ENCODE measurements at regions of chr20 and their contacts with region 1.

Region 1: DNA sequence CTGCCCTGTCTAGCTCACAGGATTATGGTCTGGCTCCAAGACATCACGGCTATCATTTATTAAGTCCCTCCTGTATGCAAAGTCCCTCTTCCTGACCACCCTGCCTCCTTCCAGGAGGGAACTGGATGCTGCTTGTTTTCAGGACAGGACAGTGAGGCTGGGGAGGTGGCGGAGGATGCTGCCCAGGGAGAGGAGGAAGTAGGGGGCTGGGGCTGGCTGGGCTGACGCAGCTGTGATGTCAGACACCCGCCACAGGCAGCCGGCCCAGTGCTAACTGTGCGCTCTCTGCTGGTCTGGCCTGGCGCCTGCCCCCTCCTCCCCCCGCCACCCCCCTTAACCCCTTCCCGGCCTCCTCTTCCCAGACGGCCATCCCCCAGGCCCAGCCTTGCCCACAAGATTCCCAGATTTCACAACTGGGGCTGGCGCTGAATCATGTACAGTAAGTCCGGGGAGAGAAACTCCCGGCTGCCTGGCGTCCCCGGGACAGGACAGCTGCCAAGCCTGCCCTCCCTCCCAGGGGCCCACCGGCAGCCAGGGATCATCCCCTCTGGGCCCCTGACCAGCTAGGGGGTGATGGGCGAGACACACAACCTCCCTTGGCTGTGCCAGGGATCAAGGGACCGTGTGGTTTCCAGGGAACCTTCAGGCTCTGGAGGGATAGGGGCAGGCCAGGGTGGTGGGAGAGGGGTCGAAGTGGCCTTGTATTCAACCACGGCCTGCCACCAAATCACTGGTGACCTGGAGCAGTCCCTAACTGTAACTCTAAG is 118.1 kb downstream of the CEBPB start:
- DNase-seq: peak; percentile 90 to 98
- ATAC-seq: peak; percentile 81 to 85
- H3K4me3 ChIP-seq: peak overlapping the region; percentile 29
- H3K27ac ChIP-seq: peak overlapping the region; percentile 93 to 98
- H3K4me1 ChIP-seq: peaks cover 95% of the 10 kb centered on the region
- CTCF ChIP-seq: no peak
- EP300 ChIP-seq: peak; percentile 88 to 99; a peak in 4 of 5 replicates
- POLR2A ChIP-seq: peak; percentile 33
- RAD21 ChIP-seq: peak; percentile 25 to 82

Region 2: GRCh38 chr20:50292324-50293243 is 16.1 kb before region 1 on chr20:
- CTCF ChIA-PET with region 1: interaction called, 9 read pairs
- POLR2A ChIA-PET with region 1: interaction called, 10 read pairs
- DNase-seq: peak; percentile 88 to 97
- ATAC-seq: peak; percentile 74 to 86
- H3K4me3 ChIP-seq: no peak overlapping the region
- H3K27ac ChIP-seq: peak overlapping the region; percentile 96
- H3K4me1 ChIP-seq: peaks cover 77% of the 10 kb centered on the region
- CTCF ChIP-seq: no peak; the same call in 2 of the 3 replicates
- EP300 ChIP-seq: peak; percentile 90 to 97
- POLR2A ChIP-seq: no peak
- RAD21 ChIP-seq: peak; percentile 29 to 62; a peak in 4 of 5 replicates

Region 3: GRCh38 chr20:50320910-50321796 is 12.5 kb after region 1 on chr20:
- CTCF ChIA-PET with region 1: interaction called, 22 read pairs
- POLR2A ChIA-PET with region 1: interaction called, 14 read pairs
- DNase-seq: peak; percentile 89 to 98
- ATAC-seq: peak; percentile 99
- H3K4me3 ChIP-seq: peak overlapping the region; percentile 76
- H3K27ac ChIP-seq: peak overlapping the region; percentile 94 to 99
- H3K4me1 ChIP-seq: peaks cover 31% of the 10 kb centered on the region
- CTCF ChIP-seq: no peak
- EP300 ChIP-seq: peak in 1 of 2 experiments; percentile 31; a peak in 1 of 5 replicates
- POLR2A ChIP-seq: peak; percentile 64
- RAD21 ChIP-seq: peak; percentile 1 to 39; a peak in 1 of 5 replicates

Measured in A549 (cell line).